IMR-90 (cell line): ENCODE measurements at regions of chr3 and their contacts with region 1.

Region 1: GRCh38 chr3:5057857-5058324 is 64.2 kb upstream of the ARL8B start:
- DNase-seq: peak; percentile 85
- ATAC-seq: peak; percentile 83
- H3K4me3 ChIP-seq: no peak overlapping the region
- H3K27ac ChIP-seq: no peak overlapping the region
- H3K4me1 ChIP-seq: peaks cover 6% of the 10 kb centered on the region
- H3K27me3 ChIP-seq: peaks cover 3% of the 10 kb centered on the region; the same call in 1 of the 2 replicates
- CTCF ChIP-seq: peak; percentile 80
- POLR2A ChIP-seq: no peak
- RAD21 ChIP-seq: peak; percentile 90

Region 2: GRCh38 chr3:4303187-4304123 is 754.4 kb before region 1 on chr3 and contains the start of gene SETMAR:
- CTCF ChIA-PET with region 1: no interaction called
- POLR2A ChIA-PET with region 1: no interaction called
- dilution Hi-C with region 1: no loop called
- in situ Hi-C with region 1: loop called (anchors 25 kb)
- intact Hi-C with region 1: no loop called
- DNase-seq: peak; percentile 78
- ATAC-seq: peak; percentile 94
- H3K4me3 ChIP-seq: peak within 1 kb of the TSS; percentile 68
- H3K27ac ChIP-seq: peak within 1 kb of the TSS; percentile 93
- H3K4me1 ChIP-seq: 0 out of 2 replicates have a peak, but pooled peaks cover 2% of the 10 kb centered on the region
- H3K27me3 ChIP-seq: no peaks in the 10 kb centered on the region
- CTCF ChIP-seq: no peak
- POLR2A ChIP-seq: peak; percentile 56; the same call in 1 of the 2 replicates
- RAD21 ChIP-seq: no peak
- total RNA-seq, gene SETMAR: 17.8 and 18.1 TPM in 2 replicates

Region 3: DNA sequence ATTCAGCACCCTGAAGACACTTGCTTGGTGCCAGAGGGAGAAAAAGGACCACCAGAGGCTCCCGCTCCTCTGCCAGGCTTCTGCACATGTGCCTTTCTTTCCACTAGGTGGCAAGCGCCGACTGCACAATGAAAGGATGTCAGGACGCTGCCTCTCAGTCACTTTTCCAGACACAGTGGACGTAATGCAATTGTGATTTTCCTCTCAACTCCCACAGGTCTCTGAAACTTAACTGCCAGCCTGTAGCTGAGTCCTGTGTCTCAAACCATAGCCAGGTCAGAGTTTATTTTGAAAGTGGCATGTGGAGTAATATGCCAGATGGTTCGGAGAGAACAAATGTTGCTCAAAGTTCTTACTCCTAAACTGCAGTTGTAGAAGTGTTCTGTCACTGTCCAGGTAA is 401.8 kb before region 1 on chr3:
- CTCF ChIA-PET with region 1: interaction called, 5 read pairs
- POLR2A ChIA-PET with region 1: no interaction called
- dilution Hi-C with region 1: no loop called
- in situ Hi-C with region 1: loop called (anchors 5 kb)
- intact Hi-C with region 1: loop called (anchors 1 kb)
- DNase-seq: peak; percentile 75
- ATAC-seq: peak; percentile 98
- H3K4me3 ChIP-seq: no peak overlapping the region
- H3K27ac ChIP-seq: no peak overlapping the region
- H3K4me1 ChIP-seq: no peaks in the 10 kb centered on the region; the same call in 1 of the 2 replicates
- H3K27me3 ChIP-seq: no peaks in the 10 kb centered on the region
- CTCF ChIP-seq: peak; percentile 97
- POLR2A ChIP-seq: 0 out of 2 replicates have a peak, but pooled peaks have one; percentile 35
- RAD21 ChIP-seq: peak; percentile 99

Region 4: DNA sequence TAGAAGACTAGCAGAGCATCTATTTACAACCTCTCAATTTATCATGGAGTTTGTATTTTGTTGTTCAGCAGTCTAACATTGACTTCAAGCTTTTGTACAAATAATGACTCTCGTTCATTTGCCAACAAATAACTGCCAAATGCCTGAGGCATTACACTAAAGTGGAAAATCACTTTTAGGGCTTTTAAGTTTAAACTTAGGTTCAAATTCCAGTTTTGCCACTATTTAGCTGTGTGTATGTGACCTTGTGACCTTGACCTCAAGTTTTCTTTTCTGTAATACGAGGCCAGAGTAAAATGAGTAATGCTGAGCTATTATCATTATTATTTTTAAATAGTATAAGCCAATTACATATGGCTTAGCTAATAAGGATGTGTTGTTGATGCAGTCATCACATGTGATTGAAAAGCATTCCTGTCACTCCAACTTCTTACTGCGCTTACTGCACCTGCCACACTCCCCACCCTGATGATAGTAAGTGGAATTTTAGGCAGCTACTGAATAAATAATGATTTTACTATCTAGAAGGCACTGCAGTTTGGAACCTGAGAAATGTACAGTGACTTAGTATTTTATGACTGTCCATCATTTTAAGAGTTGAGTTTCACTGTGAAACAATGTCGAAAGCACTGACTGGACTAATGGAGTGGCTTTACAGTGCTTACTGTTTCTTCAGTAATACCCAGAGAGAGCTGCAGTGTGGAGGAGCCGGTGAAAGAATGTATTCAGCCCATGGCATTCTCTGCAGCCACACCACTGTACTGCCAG is 80.5 kb after region 1 on chr3:
- CTCF ChIA-PET with region 1: no interaction called
- POLR2A ChIA-PET with region 1: no interaction called
- dilution Hi-C with region 1: no loop called
- in situ Hi-C with region 1: no loop called
- intact Hi-C with region 1: no loop called
- DNase-seq: peak; percentile 62
- ATAC-seq: peak; percentile 78
- H3K4me3 ChIP-seq: no peak overlapping the region
- H3K27ac ChIP-seq: no peak overlapping the region
- H3K4me1 ChIP-seq: peaks cover 8% of the 10 kb centered on the region; the same call in 1 of the 2 replicates
- H3K27me3 ChIP-seq: no peaks in the 10 kb centered on the region
- CTCF ChIP-seq: no peak
- POLR2A ChIP-seq: no peak
- RAD21 ChIP-seq: no peak